ENCODE measurements at regions of chr6 and their contacts with region 1.

Region 1: GRCh38 chr6:111605100-111605751 is 452 bp downstream of the TRAF3IP2 start:
- DNase-seq: peak; percentile 38
- H3K4me3 Mint-ChIP-seq: peak overlapping the region; percentile 82
- H3K27ac Mint-ChIP-seq: peak overlapping the region; percentile 93
- H3K4me1 Mint-ChIP-seq: peaks cover 39% of the 10 kb centered on the region
- H3K27me3 Mint-ChIP-seq: no peaks in the 10 kb centered on the region

Region 2: DNA sequence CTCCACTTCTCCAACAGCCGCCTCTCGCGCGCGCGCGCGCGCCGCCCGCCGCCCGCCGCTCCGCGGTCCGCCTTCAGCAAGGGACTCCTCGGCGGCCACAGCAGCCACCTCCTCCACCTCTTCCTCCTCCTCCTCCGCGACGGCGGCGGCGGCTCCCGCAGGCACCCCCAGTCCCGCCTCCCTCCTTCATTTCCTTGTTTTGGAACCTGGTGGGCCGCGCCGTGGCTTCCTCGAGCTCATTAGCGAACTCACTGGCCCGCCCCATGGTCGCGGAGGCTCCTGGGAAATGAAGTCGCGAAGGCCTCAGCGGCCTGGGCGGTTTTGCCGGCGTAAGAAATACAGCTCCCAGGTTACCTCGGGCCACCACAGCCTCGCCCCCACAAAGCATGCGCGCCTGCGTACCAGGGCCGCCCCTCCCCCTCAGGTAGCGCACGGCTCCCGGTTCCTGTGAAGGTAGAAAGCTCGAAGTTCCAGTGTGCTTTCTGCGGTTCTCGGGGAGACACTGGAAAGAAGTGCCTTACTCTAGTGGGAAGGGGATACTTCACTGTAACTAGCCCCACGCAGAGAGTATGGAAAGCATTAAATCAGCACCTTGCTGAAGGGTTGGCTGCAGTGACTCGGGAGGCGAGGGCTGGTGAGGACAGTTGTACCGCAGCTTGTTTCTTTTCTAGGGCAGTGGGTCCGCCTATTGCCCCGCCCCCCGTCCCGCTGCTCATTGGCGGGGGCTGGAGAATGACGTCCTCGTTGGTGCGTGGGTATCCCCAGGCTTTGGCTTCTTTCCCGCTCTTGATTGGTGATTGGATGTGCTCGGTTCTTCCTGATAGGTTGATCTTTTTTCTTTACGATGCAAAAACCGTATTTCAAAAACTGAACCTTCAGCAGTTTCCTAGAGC is 789.8 kb before region 1 on chr6 and contains the start of gene CDK19:
- CTCF ChIA-PET with region 1: no interaction called
- intact Hi-C with region 1: loop called (anchors 1 kb)
- DNase-seq: peak; percentile 99
- H3K4me3 Mint-ChIP-seq: peak within 1 kb of the TSS; percentile 100
- H3K27ac Mint-ChIP-seq: peak within 1 kb of the TSS; percentile 95
- H3K4me1 Mint-ChIP-seq: peaks cover 19% of the 10 kb centered on the region
- H3K27me3 Mint-ChIP-seq: no peaks in the 10 kb centered on the region
- total RNA-seq, gene CDK19: 11.0 to 11.7 TPM

Region 3: GRCh38 chr6:111573892-111574797 is 31.1 kb before region 1 on chr6:
- CTCF ChIA-PET with region 1: interaction called, 5 read pairs
- intact Hi-C with region 1: loop called (anchors 1 kb)
- DNase-seq: no peak
- H3K4me3 Mint-ChIP-seq: no peak overlapping the region
- H3K27ac Mint-ChIP-seq: peak overlapping the region; percentile 56
- H3K4me1 Mint-ChIP-seq: peaks cover 31% of the 10 kb centered on the region
- H3K27me3 Mint-ChIP-seq: no peaks in the 10 kb centered on the region

Region 4: GRCh38 chr6:111642463-111643158 is 37.4 kb after region 1 on chr6:
- CTCF ChIA-PET with region 1: interaction called, 7 read pairs
- intact Hi-C with region 1: loop called (anchors 2 kb)
- DNase-seq: peak; percentile 73
- H3K4me3 Mint-ChIP-seq: no peak overlapping the region
- H3K27ac Mint-ChIP-seq: no peak overlapping the region
- H3K4me1 Mint-ChIP-seq: no peaks in the 10 kb centered on the region
- H3K27me3 Mint-ChIP-seq: no peaks in the 10 kb centered on the region

Region 5: GRCh38 chr6:112018619-112019416 is 413.6 kb after region 1 on chr6:
- CTCF ChIA-PET with region 1: no interaction called
- intact Hi-C with region 1: loop called (anchors 5 kb)
- DNase-seq: no peak
- H3K4me3 Mint-ChIP-seq: no peak overlapping the region
- H3K27ac Mint-ChIP-seq: no peak overlapping the region
- H3K4me1 Mint-ChIP-seq: peaks cover 67% of the 10 kb centered on the region
- H3K27me3 Mint-ChIP-seq: no peaks in the 10 kb centered on the region